ENCODE measurements at regions of chr6 and their contacts with region 1.

Region 1: DNA sequence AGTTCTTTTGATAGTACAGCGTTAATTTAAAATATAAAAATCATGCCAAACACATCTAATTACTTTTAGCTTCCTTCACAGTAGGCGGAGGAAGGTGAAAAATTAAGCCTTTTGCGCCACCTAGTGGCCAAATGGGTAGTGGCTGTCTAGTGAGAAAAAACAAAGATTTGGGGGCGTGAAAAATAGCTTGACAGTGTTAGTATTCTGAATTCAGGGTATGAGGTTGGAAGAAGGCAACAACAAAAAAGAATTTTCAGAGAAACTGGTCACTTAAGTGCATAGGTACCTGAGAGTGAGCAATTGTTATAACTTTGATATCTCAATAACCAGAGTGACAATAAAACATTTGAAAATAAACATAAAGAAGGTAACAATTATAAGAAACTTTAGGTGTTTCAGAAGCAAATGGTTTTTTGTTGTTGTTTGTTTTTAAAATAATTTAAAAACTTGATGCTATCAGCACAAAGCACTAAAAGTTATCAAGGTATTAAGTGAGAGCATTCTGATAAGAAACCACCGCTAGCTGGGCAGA is 14.3 kb downstream of the PSMB9 start:
- DNase-seq: peak; percentile 95
- H3K4me3 Mint-ChIP-seq: no peak overlapping the region
- H3K27ac Mint-ChIP-seq: no peak overlapping the region
- H3K4me1 Mint-ChIP-seq: peaks cover 39% of the 10 kb centered on the region
- H3K27me3 Mint-ChIP-seq: no peaks in the 10 kb centered on the region

Region 2: GRCh38 chr6:32413427-32414047 is 454.8 kb before region 1 on chr6:
- CTCF ChIA-PET with region 1: interaction called, 5 read pairs
- intact Hi-C with region 1: loop called (anchors 1 kb)
- DNase-seq: peak; percentile 92
- H3K4me3 Mint-ChIP-seq: no peak overlapping the region
- H3K27ac Mint-ChIP-seq: no peak overlapping the region
- H3K4me1 Mint-ChIP-seq: peaks cover 2% of the 10 kb centered on the region
- H3K27me3 Mint-ChIP-seq: peaks cover 29% of the 10 kb centered on the region

Region 3: DNA sequence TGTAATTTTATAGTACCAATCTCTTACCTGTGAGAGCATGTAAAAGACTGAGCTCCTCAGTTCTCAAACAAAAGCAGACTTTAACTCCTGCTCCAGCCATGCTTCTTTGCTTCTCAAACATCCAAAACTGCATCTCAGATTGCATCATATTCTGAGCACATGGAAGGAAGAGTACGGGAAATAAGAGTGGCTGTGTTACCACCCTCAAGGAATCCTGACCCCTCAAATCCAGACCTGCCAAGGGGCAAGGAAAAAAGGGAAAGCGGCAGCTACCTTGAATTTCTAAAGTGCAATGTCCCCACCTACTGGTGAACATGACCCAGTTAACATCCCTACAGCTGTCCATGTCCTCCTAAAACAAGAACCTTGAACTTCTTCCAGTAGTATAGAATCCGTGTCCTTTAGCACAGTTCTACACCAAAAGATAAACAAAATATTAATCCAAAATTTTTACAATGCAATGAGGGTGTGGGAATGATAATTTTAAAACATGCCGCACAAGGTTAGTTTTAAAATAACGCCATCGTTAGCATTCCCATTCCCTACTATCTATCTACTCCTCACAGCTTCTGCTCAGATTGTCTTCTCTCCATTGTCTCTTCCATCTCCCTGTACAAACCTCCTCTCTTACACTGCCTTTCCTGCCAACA is 167.8 kb before region 1 on chr6:
- CTCF ChIA-PET with region 1: interaction called, 8 read pairs
- intact Hi-C with region 1: loop called (anchors 5 kb)
- DNase-seq: peak; percentile 30
- H3K4me3 Mint-ChIP-seq: no peak overlapping the region
- H3K27ac Mint-ChIP-seq: no peak overlapping the region
- H3K4me1 Mint-ChIP-seq: peaks cover 2% of the 10 kb centered on the region
- H3K27me3 Mint-ChIP-seq: peaks cover 24% of the 10 kb centered on the region

Region 4: GRCh38 chr6:32796848-32797776 is 71.2 kb before region 1 on chr6:
- CTCF ChIA-PET with region 1: interaction called, 11 read pairs
- intact Hi-C with region 1: loop called (anchors 2 kb)
- DNase-seq: peak; percentile 91
- H3K4me3 Mint-ChIP-seq: peak overlapping the region; percentile 47
- H3K27ac Mint-ChIP-seq: no peak overlapping the region
- H3K4me1 Mint-ChIP-seq: peaks cover 22% of the 10 kb centered on the region
- H3K27me3 Mint-ChIP-seq: peaks cover 20% of the 10 kb centered on the region

Region 5: GRCh38 chr6:32825966-32826365 is 42.4 kb before region 1 on chr6:
- CTCF ChIA-PET with region 1: interaction called, 20 read pairs
- intact Hi-C with region 1: no loop called
- DNase-seq: no peak
- H3K4me3 Mint-ChIP-seq: no peak overlapping the region
- H3K27ac Mint-ChIP-seq: no peak overlapping the region
- H3K4me1 Mint-ChIP-seq: peaks cover 36% of the 10 kb centered on the region
- H3K27me3 Mint-ChIP-seq: no peaks in the 10 kb centered on the region

Region 6: GRCh38 chr6:32853541-32854375 is 14.6 kb before region 1 on chr6 and contains the starts of genes PSMB9 and TAP1:
- CTCF ChIA-PET with region 1: interaction called, 39 read pairs
- intact Hi-C with region 1: loop called (anchors 1 kb)
- DNase-seq: peak; percentile 98
- H3K4me3 Mint-ChIP-seq: peak within 1 kb of the TSS; percentile 100
- H3K27ac Mint-ChIP-seq: peak within 1 kb of the TSS; percentile 100
- H3K4me1 Mint-ChIP-seq: peaks cover 67% of the 10 kb centered on the region
- H3K27me3 Mint-ChIP-seq: no peaks in the 10 kb centered on the region
- total RNA-seq, gene PSMB9: 238 to 241 TPM
- total RNA-seq, gene TAP1: 187 TPM

Region 7: GRCh38 chr6:33014841-33015634 is 146.7 kb after region 1 on chr6:
- CTCF ChIA-PET with region 1: no interaction called
- intact Hi-C with region 1: no loop called
- DNase-seq: peak; percentile 64
- H3K4me3 Mint-ChIP-seq: no peak overlapping the region
- H3K27ac Mint-ChIP-seq: no peak overlapping the region
- H3K4me1 Mint-ChIP-seq: peaks cover 12% of the 10 kb centered on the region
- H3K27me3 Mint-ChIP-seq: no peaks in the 10 kb centered on the region